ENCODE measurements at regions of chr2 and their contacts with region 1.

Region 1: DNA sequence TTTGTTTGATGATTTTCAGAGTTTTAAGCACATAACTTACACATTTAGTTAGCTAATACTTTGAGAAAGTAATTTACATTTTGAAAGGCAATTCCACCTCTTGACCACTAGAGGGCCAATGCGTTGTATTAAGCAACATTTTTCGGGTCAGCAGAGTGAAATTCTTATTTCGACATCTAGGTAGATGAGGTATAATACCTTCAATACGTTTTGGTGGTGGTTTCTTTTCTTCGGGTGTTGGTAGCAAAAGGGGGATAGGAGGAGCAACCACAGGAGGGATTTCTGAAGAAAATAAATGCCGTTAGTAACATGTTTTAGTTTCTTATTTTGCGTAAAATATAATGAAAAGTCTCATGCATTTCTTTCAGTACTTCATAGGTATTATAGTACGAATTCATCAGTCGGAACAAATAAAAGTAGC is 106.3 kb downstream of the TTN start:
- H3K4me3 ChIP-seq: no peak overlapping the region
- H3K27ac ChIP-seq: no peak overlapping the region
- H3K4me1 ChIP-seq: no peaks in the 10 kb centered on the region
- CTCF ChIP-seq: peak; percentile 54

Region 2: GRCh38 chr2:178716394-178716793 is 15.5 kb after region 1 on chr2:
- CTCF ChIA-PET with region 1: interaction called, 10 read pairs
- POLR2A ChIA-PET with region 1: no interaction called
- H3K4me3 ChIP-seq: no peak overlapping the region
- H3K27ac ChIP-seq: no peak overlapping the region
- H3K4me1 ChIP-seq: no peaks in the 10 kb centered on the region
- CTCF ChIP-seq: no peak

Region 3: DNA sequence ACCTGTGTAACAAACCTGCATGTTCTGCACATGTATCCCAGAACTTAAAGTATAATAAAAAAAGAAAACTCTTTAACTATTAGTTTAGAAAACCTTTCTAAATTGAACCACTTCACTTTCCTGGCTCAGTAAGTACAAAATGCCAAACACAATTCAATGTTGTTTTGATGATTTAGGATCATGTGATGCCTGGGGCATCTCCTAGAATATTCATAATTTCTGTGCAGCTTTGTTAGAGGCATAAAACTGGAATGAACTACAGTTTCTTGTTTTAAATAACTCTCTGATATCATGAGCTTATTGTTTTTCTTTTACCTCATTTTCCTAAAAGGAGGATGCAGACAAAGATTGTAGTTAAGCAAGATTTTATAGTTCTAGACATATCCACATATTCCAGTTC is 702.7 kb after region 1 on chr2:
- CTCF ChIA-PET with region 1: no interaction called
- POLR2A ChIA-PET with region 1: no interaction called
- H3K4me3 ChIP-seq: no peak overlapping the region
- H3K27ac ChIP-seq: no peak overlapping the region
- H3K4me1 ChIP-seq: no peaks in the 10 kb centered on the region
- CTCF ChIP-seq: no peak